Dorsolateral prefrontal cortex (tissue), 120 donors: ENCODE measurements at regions of chr6 and their contacts with region 1.

Region 1: DNA sequence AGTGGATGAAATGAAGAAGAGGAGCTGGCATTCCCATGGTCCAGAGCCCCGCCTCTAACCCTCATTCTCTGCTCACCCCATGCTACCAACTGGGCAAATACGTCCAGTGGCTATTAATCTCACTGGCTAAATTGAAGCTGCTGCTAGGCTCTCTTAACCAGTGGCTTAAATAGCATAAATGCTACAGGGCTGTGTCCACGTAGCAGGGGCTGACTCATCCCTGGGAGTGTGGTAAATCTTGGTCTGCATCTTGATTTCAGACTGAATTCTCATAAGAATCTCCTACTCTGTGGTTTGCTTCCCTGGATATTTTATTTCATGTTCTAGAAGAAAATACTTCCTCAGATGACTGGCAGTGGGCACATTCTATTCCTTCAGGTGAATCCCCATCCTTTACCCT is 193.1 kb upstream of the ARG1 start:
- DNase-seq: peak in 1 of 10 donors; percentile 49
- H3K4me3 ChIP-seq: no peak overlapping the region
- H3K27ac ChIP-seq: peak overlapping the region in 1 of 59 donors; percentile 35
- H3K27me3 ChIP-seq: no peaks in the 10 kb centered on the region
- CTCF ChIP-seq: no peak

Region 2: DNA sequence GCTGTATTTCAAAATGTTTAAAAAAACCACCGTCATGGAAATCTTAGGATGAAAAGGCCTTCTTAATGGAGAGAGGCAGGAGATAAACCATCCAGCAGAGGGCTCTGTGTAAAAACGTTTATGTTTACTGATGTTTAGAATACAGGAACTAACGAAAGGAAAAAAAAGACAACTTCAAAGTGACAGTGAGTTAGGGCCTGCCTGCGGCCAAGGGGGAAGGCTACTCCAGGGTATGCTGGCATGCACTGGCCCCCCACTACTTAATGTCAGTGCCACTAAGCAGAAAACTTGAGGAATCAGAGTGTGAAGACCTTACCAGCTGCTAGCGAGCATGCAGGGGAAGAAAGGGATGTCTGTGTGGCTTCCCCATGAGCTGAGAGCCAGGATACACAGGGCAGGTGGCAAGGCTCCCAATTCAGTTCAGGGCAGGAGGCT is 196.9 kb before region 1 on chr6:
- intact Hi-C with region 1: no loop called
- DNase-seq: no peak
- H3K4me3 ChIP-seq: peak overlapping the region in 24 of 59 donors; percentile 1 to 56 (median 28)
- H3K27ac ChIP-seq: peak overlapping the region in 8 of 59 donors; percentile 6 to 62 (median 36)
- H3K27me3 ChIP-seq: no peaks in the 10 kb centered on the region
- CTCF ChIP-seq: peak; percentile 47 to 79 (median 64)

Region 3: DNA sequence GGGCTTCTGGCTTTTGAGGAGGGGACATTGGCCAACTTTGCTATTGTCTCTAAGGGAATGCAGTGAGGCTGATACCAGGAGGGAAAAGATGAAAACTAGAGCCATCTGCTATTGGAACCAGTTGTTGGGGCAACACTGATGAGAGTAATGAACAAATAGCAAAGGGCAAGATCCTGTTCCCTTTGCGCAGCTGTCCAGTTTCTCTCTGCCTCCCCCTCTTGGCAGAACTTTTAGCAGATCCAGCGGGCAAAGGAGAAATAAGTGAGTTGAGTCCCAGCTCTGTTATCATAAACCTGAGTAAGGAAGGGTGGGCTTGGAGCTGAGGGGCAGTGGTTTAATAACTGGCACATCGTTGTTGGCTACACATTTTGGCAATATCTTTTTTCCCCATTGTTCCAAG is 117.9 kb before region 1 on chr6:
- intact Hi-C with region 1: no loop called
- DNase-seq: no peak
- H3K4me3 ChIP-seq: no peak overlapping the region
- H3K27ac ChIP-seq: no peak overlapping the region
- H3K27me3 ChIP-seq: no peaks in the 10 kb centered on the region
- CTCF ChIP-seq: no peak

Region 4: DNA sequence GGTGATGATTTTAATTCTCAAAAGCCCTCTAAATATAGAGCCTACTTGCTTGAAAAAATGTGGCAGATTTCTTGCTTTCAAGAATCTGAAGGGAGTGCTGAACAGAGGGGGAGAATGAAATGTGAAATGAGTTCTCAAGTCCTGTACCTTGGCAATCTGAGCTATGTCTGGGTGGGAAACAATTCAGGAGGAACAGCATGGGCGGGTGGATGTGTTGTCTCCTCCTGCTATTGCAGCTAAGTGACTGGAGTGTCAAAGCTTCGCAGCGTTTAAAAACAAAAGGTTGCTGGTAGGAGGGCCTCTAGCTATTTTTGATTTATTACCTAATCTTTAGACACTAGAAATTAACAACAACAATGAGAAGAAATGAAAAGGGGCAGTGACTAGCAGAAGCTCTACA is 90.6 kb after region 1 on chr6:
- intact Hi-C with region 1: loop called in 1 of 2 experiments (anchors 10 kb)
- DNase-seq: peak in 5 of 10 donors; percentile 18 to 72 (median 50)
- H3K4me3 ChIP-seq: no peak overlapping the region
- H3K27ac ChIP-seq: peak overlapping the region in 46 of 59 donors; percentile 16 to 82 (median 68)
- H3K27me3 ChIP-seq: no peaks in the 10 kb centered on the region
- CTCF ChIP-seq: no peak